ENCODE measurements at regions of chr2 and their contacts with region 1.

Region 1: GRCh38 chr2:73085691-73086360 is 14.3 kb upstream of the SFXN5 start:
- DNase-seq: peak; percentile 95
- ATAC-seq: peak; percentile 80
- H3K4me3 Mint-ChIP-seq: no peak overlapping the region
- H3K27ac Mint-ChIP-seq: no peak overlapping the region
- H3K4me1 Mint-ChIP-seq: peaks cover 18% of the 10 kb centered on the region
- H3K27me3 Mint-ChIP-seq: no peaks in the 10 kb centered on the region
- CTCF ChIP-seq: peak; percentile 81

Region 2: GRCh38 chr2:73099486-73099885 is 13.7 kb after region 1 on chr2:
- CTCF ChIA-PET with region 1: interaction called, 27 read pairs
- POLR2A ChIA-PET with region 1: no interaction called
- DNase-seq: no peak
- ATAC-seq: no peak
- H3K4me3 Mint-ChIP-seq: no peak overlapping the region
- H3K27ac Mint-ChIP-seq: no peak overlapping the region
- H3K4me1 Mint-ChIP-seq: peaks cover 27% of the 10 kb centered on the region
- H3K27me3 Mint-ChIP-seq: no peaks in the 10 kb centered on the region
- CTCF ChIP-seq: no peak

Region 3: DNA sequence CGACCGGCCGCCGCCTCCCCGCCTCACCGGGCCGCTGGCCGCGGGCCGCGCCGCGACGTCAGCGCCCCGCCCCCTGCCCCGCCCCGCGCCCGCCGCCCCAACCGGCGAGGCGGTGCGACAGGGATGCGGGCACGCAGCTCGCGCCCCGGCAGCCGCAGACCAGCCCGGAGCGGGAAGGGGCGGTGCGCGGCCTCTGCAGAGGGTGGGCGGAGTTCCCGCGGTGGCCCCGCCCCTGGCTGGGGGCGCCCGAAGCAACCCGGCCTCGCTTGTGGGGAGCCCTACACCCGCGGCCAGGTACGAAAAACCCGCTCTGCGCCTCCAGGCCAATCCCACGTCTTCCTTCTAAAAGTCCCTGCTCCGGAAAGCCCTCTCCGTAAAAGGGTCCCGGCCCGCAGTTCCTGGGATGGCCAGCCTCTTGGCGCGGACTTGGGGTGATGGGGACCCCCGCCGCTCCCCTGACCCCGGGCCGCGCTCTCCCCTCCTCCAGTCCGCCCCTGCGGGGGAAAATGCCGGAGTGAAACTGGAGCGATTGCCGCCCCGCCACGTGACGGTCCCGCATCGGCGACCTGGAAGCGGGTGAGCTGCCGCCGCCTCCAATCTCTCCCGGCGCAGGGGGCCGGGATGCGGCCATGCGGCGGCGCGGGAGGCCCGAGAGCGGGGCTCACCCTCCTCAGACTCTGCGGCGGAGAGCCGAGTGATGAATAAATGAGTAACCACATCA is 27.2 kb after region 1 on chr2 and contains the start of gene RAB11FIP5:
- CTCF ChIA-PET with region 1: interaction called, 40 read pairs
- POLR2A ChIA-PET with region 1: interaction called, 3 read pairs
- DNase-seq: peak; percentile 86
- ATAC-seq: peak; percentile 87
- H3K4me3 Mint-ChIP-seq: peak within 1 kb of the TSS; percentile 83
- H3K27ac Mint-ChIP-seq: no peak within 1 kb of the TSS
- H3K4me1 Mint-ChIP-seq: peaks cover 23% of the 10 kb centered on the region
- H3K27me3 Mint-ChIP-seq: peaks cover 26% of the 10 kb centered on the region
- CTCF ChIP-seq: no peak
- total RNA-seq, gene RAB11FIP5: 14.0 to 16.0 TPM (median 14.3 TPM) in 3 replicates

Region 4: GRCh38 chr2:73163483-73164367 is 77.9 kb after region 1 on chr2:
- CTCF ChIA-PET with region 1: interaction called, 10 read pairs
- POLR2A ChIA-PET with region 1: no interaction called
- DNase-seq: peak; percentile 86
- ATAC-seq: peak; percentile 97
- H3K4me3 Mint-ChIP-seq: no peak overlapping the region
- H3K27ac Mint-ChIP-seq: 0 out of 2 replicates have a peak overlapping the region, but pooled peaks have one; percentile 78
- H3K4me1 Mint-ChIP-seq: no peaks in the 10 kb centered on the region
- H3K27me3 Mint-ChIP-seq: peaks cover 11% of the 10 kb centered on the region
- CTCF ChIP-seq: peak; percentile 84

Measured in WTC11 (cell line).